Naive thymus-derived CD4-positive, alpha-beta T cell (primary cell): ENCODE measurements at regions of chr3 and their contacts with region 1.

Region 1: DNA sequence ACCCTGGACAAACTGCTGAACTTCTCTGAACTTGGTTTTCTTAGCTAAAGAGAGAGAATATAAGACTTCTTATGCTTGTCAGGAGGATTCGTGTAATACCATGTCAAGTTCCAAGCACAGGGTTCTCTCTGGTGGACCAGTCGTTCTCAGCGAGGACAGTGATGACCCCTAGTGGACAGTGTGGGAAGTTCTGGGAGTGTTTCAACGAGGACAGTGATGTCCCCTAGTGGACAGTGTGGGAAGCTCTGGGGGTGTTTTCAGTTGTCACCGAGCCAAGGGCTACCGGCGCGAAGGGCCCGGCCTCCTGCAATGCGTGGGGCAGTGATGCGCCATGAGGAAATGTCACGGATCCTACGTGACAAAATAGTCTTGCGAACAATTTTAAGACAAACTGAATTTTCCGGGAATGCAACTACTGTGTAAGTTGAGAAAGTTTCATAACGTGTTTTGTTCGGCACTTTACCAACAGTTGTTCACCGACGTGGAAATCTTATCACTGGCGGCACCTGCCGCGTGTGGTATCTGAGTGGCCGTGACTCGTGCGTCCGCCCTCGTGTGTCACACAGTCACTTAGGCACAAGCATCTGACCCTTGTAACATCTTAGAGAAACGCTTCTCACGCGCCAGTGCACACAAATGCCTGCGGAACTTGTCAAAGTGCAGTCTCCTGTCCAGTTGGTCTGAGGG is 39.3 kb upstream of the MUC4 start:
- DNase-seq: peak; percentile 62 to 92 (median 86)
- ATAC-seq: peak; percentile 100
- H3K4me3 ChIP-seq: no peak overlapping the region
- H3K4me3 Mint-ChIP-seq: peak overlapping the region in 9 of 10 donors; percentile 31 to 76 (median 55)
- H3K27ac ChIP-seq: no peak overlapping the region
- H3K27ac Mint-ChIP-seq: peak overlapping the region in 3 of 9 donors; percentile 17 to 40 (median 20)
- H3K4me1 ChIP-seq: no peaks in the 10 kb centered on the region
- H3K4me1 Mint-ChIP-seq: peaks cover 2 to 24% (median 6%) of the 10 kb centered on the region in 7 donors
- H3K27me3 ChIP-seq: no peaks in the 10 kb centered on the region
- H3K27me3 Mint-ChIP-seq: peaks cover 0 to 3% (median 0%) of the 10 kb centered on the region in 5 donors

Region 2: DNA sequence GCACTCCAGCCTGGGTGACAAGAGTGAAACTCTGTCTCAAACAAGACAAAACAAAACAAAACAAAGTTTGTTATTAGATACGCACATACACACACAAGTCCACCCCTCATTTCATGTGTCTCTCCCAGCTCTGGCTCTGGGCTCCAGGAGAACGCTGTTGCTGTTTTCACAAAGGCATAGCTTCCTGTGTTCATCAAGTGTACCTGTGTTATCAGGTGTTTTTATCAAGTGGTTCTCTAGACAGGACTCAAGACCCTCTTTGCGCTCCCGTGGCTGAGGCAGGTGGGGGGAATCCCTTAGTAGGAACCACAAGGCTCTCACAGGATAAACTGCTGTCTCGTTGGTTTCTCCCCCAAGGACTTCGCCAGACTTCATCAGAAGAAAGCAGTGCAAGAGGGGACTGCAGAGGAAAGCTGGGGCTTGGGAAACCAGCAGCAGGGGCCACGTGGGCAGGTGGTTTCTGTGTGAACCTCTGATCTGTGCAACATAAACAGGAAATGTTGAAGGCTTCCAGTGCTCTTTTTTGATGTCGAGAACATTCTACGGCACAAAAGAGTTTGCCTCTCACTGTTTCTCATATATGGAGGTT is 301.0 kb before region 1 on chr3:
- CTCF ChIA-PET with region 1: interaction called, 16 read pairs
- POLR2A ChIA-PET with region 1: interaction called, 3 read pairs
- intact Hi-C with region 1: no loop called
- DNase-seq: peak; percentile 45 to 95 (median 94)
- ATAC-seq: peak; percentile 89
- H3K4me3 ChIP-seq: peak overlapping the region; percentile 43
- H3K4me3 Mint-ChIP-seq: peak overlapping the region; percentile 73 to 98 (median 90)
- H3K27ac ChIP-seq: peak overlapping the region; percentile 69
- H3K27ac Mint-ChIP-seq: peak overlapping the region; percentile 91 to 100 (median 99)
- H3K4me1 ChIP-seq: peaks cover 70 to 72% of the 10 kb centered on the region in 2 donors
- H3K4me1 Mint-ChIP-seq: peaks cover 44 to 93% (median 86%) of the 10 kb centered on the region in 7 donors
- H3K27me3 ChIP-seq: no peaks in the 10 kb centered on the region
- H3K27me3 Mint-ChIP-seq: no peaks in the 10 kb centered on the region

Region 3: DNA sequence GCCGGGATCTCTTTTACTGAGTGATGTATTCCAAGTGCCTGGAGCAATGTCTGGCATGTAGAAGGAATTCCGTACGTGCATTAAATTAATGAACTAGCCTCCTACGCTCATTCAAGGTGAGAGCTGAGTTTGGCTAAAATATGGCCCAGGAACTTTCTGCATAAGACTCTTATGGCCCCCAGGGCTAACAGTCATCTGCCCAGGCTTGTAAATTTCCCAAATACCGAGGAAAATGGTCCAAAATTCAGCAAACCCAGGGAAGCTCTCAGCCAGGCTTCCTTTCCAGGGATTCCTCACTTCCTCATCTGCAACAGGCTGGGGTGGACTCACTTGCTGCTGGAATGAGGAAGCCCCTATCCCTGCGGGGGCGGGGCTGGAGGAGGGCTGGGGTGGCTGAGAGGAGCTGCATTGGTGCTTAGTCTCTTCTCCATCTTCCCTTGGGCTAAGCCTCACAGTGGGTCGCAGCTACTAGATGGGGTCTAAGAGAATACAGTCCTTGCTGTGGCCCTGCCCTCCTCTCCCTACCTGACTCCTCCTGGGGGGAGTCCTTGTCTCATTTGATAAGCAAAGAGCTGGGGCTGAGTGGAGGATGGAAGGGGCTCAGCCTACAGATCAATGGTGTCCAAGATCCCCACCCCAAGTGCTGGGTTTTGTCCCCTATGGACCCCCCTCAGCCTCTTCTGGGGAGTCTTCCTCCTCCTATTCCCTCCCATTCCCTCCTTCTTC is 238.8 kb before region 1 on chr3:
- CTCF ChIA-PET with region 1: interaction called, 3 read pairs
- POLR2A ChIA-PET with region 1: no interaction called
- intact Hi-C with region 1: loop called in 1 of 2 experiments (anchors 5 kb)
- DNase-seq: no peak
- ATAC-seq: no peak
- H3K4me3 ChIP-seq: no peak overlapping the region
- H3K4me3 Mint-ChIP-seq: no peak overlapping the region
- H3K27ac ChIP-seq: no peak overlapping the region
- H3K27ac Mint-ChIP-seq: peak overlapping the region in 6 of 9 donors; percentile 11 to 84 (median 67)
- H3K4me1 ChIP-seq: peaks cover 6 to 23% of the 10 kb centered on the region in 2 donors
- H3K4me1 Mint-ChIP-seq: peaks cover 26 to 63% (median 43%) of the 10 kb centered on the region in 7 donors
- H3K27me3 ChIP-seq: no peaks in the 10 kb centered on the region
- H3K27me3 Mint-ChIP-seq: peaks cover 0 to 2% (median 0%) of the 10 kb centered on the region in 5 donors

Region 4: DNA sequence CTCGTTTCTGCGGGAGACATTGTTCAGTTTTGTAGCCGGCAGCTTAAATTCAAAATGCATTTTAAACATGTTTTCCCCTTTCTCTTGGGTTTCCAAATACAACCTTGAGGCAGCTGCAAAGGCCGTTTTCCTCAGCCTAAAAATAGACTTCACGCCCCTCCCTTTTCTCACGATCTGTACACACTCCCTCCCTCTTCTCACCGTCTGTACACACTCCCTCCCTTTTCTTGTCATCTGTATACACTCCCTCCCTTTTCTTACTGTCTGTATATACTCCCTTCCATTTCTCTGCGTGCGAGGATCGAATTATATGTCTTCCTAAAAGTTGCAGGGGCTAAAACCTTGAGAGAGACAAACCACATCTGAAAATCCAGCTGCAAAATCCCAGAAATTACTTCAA is 48.2 kb before region 1 on chr3:
- CTCF ChIA-PET with region 1: no interaction called
- POLR2A ChIA-PET with region 1: no interaction called
- intact Hi-C with region 1: loop called in 1 of 2 experiments (anchors 1 kb)
- DNase-seq: no peak
- ATAC-seq: peak; percentile 50
- H3K4me3 ChIP-seq: no peak overlapping the region
- H3K4me3 Mint-ChIP-seq: peak overlapping the region; percentile 3 to 85 (median 50)
- H3K27ac ChIP-seq: peak overlapping the region; percentile 17
- H3K27ac Mint-ChIP-seq: peak overlapping the region in 6 of 9 donors; percentile 3 to 99 (median 72)
- H3K4me1 ChIP-seq: peaks cover 10 to 38% of the 10 kb centered on the region in 2 donors
- H3K4me1 Mint-ChIP-seq: peaks cover 48 to 66% (median 55%) of the 10 kb centered on the region in 7 donors
- H3K27me3 ChIP-seq: no peaks in the 10 kb centered on the region
- H3K27me3 Mint-ChIP-seq: peaks cover 0 to 4% (median 2%) of the 10 kb centered on the region in 5 donors

Region 5: GRCh38 chr3:196192036-196192523 is 341.1 kb after region 1 on chr3:
- CTCF ChIA-PET with region 1: no interaction called
- POLR2A ChIA-PET with region 1: no interaction called
- intact Hi-C with region 1: loop called in 1 of 2 experiments (anchors 10 kb)
- DNase-seq: peak in 4 of 9 donors; percentile 27 to 57 (median 35)
- ATAC-seq: peak; percentile 64
- H3K4me3 ChIP-seq: no peak overlapping the region
- H3K4me3 Mint-ChIP-seq: peak overlapping the region in 7 of 10 donors; percentile 25 to 73 (median 49)
- H3K27ac ChIP-seq: peak overlapping the region; percentile 63
- H3K27ac Mint-ChIP-seq: peak overlapping the region; percentile 61 to 98 (median 87)
- H3K4me1 ChIP-seq: peaks cover 9 to 29% of the 10 kb centered on the region in 2 donors
- H3K4me1 Mint-ChIP-seq: peaks cover 14 to 41% (median 16%) of the 10 kb centered on the region in 7 donors
- H3K27me3 ChIP-seq: no peaks in the 10 kb centered on the region
- H3K27me3 Mint-ChIP-seq: no peaks in the 10 kb centered on the region